Right ventricle myocardium superior (tissue), 1 donor: ENCODE measurements at regions of chr4 and their contacts with region 1.

Region 1: GRCh38 chr4:11623726-11624037 is 195.0 kb upstream of the HS3ST1 start:
- DNase-seq: no peak
- ATAC-seq: peak; percentile 64

Region 2: DNA sequence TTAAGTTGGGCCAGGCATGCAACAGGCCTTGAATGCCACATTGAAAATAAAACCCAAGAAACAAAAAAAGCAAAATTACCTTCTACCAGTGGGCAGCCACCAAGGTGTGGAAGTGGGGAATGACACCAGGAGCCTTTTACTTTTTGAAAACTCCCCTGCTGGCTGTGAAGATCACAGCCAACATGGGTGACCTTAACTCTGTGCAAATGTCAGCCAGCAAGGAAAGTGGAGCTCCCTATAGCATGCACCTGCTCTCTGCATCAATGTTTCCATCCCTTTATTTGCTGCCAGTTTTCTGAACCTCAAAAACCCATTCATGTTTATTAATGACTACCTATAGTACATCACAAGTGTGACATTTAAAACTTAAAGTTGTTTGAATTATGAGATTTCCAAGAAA is 258.6 kb before region 1 on chr4:
- intact Hi-C with region 1: no loop called
- DNase-seq: no peak
- ATAC-seq: no peak

Region 3: GRCh38 chr4:11428899-11429698 is 194.6 kb before region 1 on chr4:
- intact Hi-C with region 1: loop called (anchors 10 kb)
- DNase-seq: peak; percentile 89
- ATAC-seq: peak; percentile 97

Region 4: DNA sequence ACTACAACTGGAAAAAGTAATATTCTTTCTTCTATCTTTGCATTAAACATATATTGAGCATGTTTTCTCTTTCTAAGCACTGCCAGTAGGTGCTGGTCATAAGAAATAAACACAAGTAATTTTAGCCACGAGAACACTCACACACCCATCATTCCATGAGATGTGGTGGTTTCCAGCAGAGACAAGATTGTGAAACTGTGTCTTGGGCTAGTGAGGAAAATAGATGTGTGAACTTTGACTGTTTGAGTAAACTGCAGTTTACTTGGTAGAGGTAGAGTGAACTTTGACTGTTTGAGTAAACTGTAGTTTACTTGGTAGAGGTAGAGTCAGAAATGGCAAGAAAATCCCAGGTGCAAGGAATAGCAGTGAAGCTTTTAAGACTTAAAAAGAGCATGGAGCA is 105.9 kb after region 1 on chr4:
- intact Hi-C with region 1: no loop called
- DNase-seq: no peak
- ATAC-seq: no peak